Activated CD8-positive, alpha-beta memory T cell treated with anti-CD3 and anti-CD28 coated beads, Interleukin-2, amount 10 ng/mL, durations not matched to agents 7 days and 5 days (primary cell): ENCODE measurements at regions of chr12 and their contacts with region 1.

Region 1: DNA sequence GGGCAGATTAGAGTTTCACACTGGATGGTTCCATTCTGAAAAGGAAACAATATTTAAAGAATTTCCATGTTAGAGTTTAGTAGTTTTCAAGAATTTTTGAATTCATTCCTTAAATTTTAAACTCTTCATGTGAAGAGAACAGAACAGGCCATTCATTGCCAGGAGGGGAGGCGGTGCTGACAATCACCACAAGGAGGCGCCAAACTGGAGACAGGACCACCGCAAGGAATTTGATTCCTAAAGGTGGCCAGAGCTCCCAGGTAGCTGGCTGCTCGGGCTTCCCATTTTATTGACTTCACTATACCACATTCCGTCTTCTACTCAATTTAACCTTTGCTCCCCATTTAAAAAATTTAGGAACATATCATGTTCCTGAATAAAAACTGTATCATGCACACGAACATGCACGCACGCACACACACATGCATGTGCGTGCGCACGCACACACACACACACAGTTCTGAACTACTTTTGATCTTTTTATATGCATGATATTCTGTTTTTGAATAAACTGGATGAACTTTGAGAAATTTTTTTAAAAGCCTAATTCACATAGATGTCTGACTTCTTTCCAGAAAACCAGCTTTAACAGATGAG is 101.2 kb downstream of the NELL2 start:
- DNase-seq: peak; percentile 56
- ATAC-seq: no peak
- H3K4me3 Mint-ChIP-seq: no peak overlapping the region
- H3K27ac Mint-ChIP-seq: no peak overlapping the region
- H3K4me1 Mint-ChIP-seq: no peaks in the 10 kb centered on the region
- H3K27me3 Mint-ChIP-seq: no peaks in the 10 kb centered on the region

Region 2: GRCh38 chr12:44689587-44689986 is 85.3 kb before region 1 on chr12:
- CTCF ChIA-PET with region 1: no interaction called
- DNase-seq: no peak
- ATAC-seq: no peak
- H3K4me3 Mint-ChIP-seq: no peak overlapping the region
- H3K27ac Mint-ChIP-seq: no peak overlapping the region
- H3K4me1 Mint-ChIP-seq: no peaks in the 10 kb centered on the region
- H3K27me3 Mint-ChIP-seq: no peaks in the 10 kb centered on the region

Region 3: GRCh38 chr12:44812062-44812461 is 37.1 kb after region 1 on chr12:
- CTCF ChIA-PET with region 1: interaction called, 15 read pairs
- DNase-seq: peak; percentile 65
- ATAC-seq: peak; percentile 92
- H3K4me3 Mint-ChIP-seq: no peak overlapping the region
- H3K27ac Mint-ChIP-seq: no peak overlapping the region
- H3K4me1 Mint-ChIP-seq: peaks cover 20% of the 10 kb centered on the region
- H3K27me3 Mint-ChIP-seq: no peaks in the 10 kb centered on the region